Activated T-helper 1 cell treated with anti-CD3 and anti-CD28 coated beads, Interleukin-12 subunit alpha, Interleukin-12 subunit beta, Interleukin-2, Interleukin-4 antibody, amounts not matched to agents 30 ng/mL and 10 ng/mL and 1 ng/mL, durations not matched to agents 14 hours and 24 hours and 36 hours (primary cell): ENCODE measurements at regions of chr10 and their contacts with region 1.

Region 1: GRCh38 chr10:5385224-5385623 is 19.4 kb downstream of the TUBAL3 start:
- DNase-seq: no peak
- H3K4me3 Mint-ChIP-seq: no peak overlapping the region
- H3K27ac Mint-ChIP-seq: no peak overlapping the region
- H3K4me1 Mint-ChIP-seq: no peaks in the 10 kb centered on the region
- H3K27me3 Mint-ChIP-seq: peaks cover 4% of the 10 kb centered on the region

Region 2: GRCh38 chr10:4820804-4821401 is 564.3 kb before region 1 on chr10:
- intact Hi-C with region 1: loop called (anchors 5 kb)
- DNase-seq: no peak
- H3K4me3 Mint-ChIP-seq: no peak overlapping the region
- H3K27ac Mint-ChIP-seq: no peak overlapping the region
- H3K4me1 Mint-ChIP-seq: peaks cover 3% of the 10 kb centered on the region
- H3K27me3 Mint-ChIP-seq: peaks cover 46% of the 10 kb centered on the region

Region 3: GRCh38 chr10:5094265-5095205 is 290.7 kb before region 1 on chr10 and contains the start of gene AKR1C3:
- intact Hi-C with region 1: loop called (anchors 1 kb)
- DNase-seq: no peak
- H3K4me3 Mint-ChIP-seq: peak within 1 kb of the TSS; percentile 59
- H3K27ac Mint-ChIP-seq: no peak within 1 kb of the TSS
- H3K4me1 Mint-ChIP-seq: peaks cover 14% of the 10 kb centered on the region
- H3K27me3 Mint-ChIP-seq: peaks cover 2% of the 10 kb centered on the region
- total RNA-seq, gene AKR1C3: 0.26 TPM in 1 of 2 replicates, not detected in the other

Region 4: GRCh38 chr10:5396556-5397300 is 11.5 kb after region 1 on chr10:
- intact Hi-C with region 1: no loop called
- DNase-seq: no peak
- H3K4me3 Mint-ChIP-seq: no peak overlapping the region
- H3K27ac Mint-ChIP-seq: no peak overlapping the region
- H3K4me1 Mint-ChIP-seq: no peaks in the 10 kb centered on the region
- H3K27me3 Mint-ChIP-seq: peaks cover 21% of the 10 kb centered on the region